Calu3 (cell line): ENCODE measurements at regions of chr17 and their contacts with region 1.

Region 1: DNA sequence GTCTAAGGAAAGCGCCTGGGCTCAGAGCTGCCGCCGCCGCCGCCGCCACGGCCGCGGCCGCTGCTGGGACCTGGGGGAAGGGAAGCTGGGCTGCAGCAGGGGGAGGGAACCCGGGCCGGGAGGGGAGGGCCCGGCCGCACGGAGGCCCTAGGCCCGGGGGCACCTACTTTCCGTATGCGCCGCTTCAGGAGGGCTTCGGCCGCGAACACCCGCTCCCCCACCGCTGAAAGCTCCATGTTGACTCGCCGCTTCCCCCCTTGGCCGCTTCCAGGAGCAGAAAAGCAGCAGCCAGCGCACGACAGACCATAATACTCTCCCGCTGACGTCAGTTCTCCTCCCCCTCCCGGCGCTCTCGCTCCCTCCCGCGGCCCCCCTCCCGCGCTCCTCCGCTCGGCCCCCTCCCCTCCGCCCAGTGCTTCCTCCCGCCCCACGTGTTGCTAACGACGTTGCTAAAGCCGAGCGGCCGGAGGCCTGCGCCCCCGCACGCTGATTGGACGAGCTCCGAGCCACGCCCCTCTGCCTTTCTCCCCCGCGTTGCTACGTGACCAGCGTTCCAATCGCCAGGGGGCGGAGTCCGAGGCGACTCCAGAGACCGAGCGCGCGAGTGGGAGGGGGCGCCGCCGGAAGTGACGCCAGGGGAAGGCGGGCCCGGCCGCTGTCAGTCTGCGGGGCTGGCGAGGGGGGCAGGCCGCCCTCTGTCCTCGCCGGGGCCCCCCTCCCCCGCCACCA is at the start of gene CBX8:
- DNase-seq: peak; percentile 100
- H3K4me3 Mint-ChIP-seq: peak within 1 kb of the TSS; percentile 75
- H3K27ac Mint-ChIP-seq: peak within 1 kb of the TSS; percentile 86
- H3K4me1 Mint-ChIP-seq: peaks cover 22% of the 10 kb centered on the region
- H3K27me3 Mint-ChIP-seq: peaks cover 39% of the 10 kb centered on the region
- CTCF ChIP-seq: no peak
- total RNA-seq, gene CBX8: 11.1 and 11.8 TPM in 2 replicates

Region 2: GRCh38 chr17:79126139-79126538 is 670.8 kb before region 1 on chr17:
- CTCF ChIA-PET with region 1: no interaction called
- intact Hi-C with region 1: no loop called
- DNase-seq: peak; percentile 40
- H3K4me3 Mint-ChIP-seq: no peak overlapping the region
- H3K27ac Mint-ChIP-seq: no peak overlapping the region
- H3K4me1 Mint-ChIP-seq: no peaks in the 10 kb centered on the region
- H3K27me3 Mint-ChIP-seq: no peaks in the 10 kb centered on the region
- CTCF ChIP-seq: peak; percentile 55

Region 3: DNA sequence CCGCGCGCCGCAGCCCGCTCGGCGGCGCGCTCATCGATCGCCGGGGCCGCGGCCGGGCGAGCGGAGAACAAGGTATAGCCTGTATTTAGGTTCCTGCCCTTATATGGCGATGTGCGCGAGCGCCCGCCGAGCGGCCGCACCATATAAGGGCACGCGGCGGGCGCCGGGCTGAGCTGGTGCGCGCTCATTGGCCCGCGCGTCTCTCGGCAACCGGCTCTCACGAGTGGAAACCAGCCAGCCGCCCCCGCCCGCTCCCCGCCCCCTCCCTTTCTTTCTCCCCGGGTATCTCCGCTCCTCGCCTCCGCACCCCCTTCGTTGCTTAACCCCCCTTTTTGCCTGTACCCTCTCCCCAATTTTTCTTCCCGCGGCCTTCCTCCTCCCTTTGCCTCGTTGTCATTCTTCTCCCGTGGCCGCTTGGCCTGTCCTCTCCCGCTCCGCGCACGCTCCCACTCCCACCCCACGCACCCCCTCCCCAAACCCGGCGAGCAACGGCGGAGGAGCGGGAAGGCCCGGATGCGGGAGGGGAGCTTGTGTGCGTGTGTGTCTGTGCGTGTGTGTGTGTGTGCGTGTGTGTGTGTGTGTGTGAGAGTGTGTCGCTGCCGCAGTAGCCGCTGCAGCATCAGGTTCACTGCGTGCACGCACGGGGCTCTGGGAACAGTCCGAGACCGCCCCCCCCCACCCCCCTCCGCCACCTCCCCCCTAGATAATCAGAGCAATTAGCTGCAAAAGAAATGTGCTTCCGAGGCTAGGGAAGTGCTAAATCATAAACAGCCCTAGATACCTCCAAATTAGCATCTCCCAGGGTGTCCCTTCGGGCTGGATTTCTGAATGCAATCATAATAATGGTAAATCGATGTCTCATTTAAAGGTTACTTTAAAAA is 13.4 kb after region 1 on chr17:
- CTCF ChIA-PET with region 1: interaction called, 16 read pairs
- intact Hi-C with region 1: no loop called
- DNase-seq: peak; percentile 88
- H3K4me3 Mint-ChIP-seq: peak overlapping the region; percentile 65
- H3K27ac Mint-ChIP-seq: peak overlapping the region; percentile 48
- H3K4me1 Mint-ChIP-seq: peaks cover 22% of the 10 kb centered on the region
- H3K27me3 Mint-ChIP-seq: peaks cover 52% of the 10 kb centered on the region
- CTCF ChIP-seq: no peak

Region 4: GRCh38 chr17:79832211-79833109 is 35.5 kb after region 1 on chr17:
- CTCF ChIA-PET with region 1: interaction called, 10 read pairs
- intact Hi-C with region 1: loop called (anchors 5 kb)
- DNase-seq: peak; percentile 50
- H3K4me3 Mint-ChIP-seq: peak overlapping the region; percentile 40
- H3K27ac Mint-ChIP-seq: peak overlapping the region; percentile 10
- H3K4me1 Mint-ChIP-seq: peaks cover 38% of the 10 kb centered on the region
- H3K27me3 Mint-ChIP-seq: no peaks in the 10 kb centered on the region
- CTCF ChIP-seq: no peak

Region 5: DNA sequence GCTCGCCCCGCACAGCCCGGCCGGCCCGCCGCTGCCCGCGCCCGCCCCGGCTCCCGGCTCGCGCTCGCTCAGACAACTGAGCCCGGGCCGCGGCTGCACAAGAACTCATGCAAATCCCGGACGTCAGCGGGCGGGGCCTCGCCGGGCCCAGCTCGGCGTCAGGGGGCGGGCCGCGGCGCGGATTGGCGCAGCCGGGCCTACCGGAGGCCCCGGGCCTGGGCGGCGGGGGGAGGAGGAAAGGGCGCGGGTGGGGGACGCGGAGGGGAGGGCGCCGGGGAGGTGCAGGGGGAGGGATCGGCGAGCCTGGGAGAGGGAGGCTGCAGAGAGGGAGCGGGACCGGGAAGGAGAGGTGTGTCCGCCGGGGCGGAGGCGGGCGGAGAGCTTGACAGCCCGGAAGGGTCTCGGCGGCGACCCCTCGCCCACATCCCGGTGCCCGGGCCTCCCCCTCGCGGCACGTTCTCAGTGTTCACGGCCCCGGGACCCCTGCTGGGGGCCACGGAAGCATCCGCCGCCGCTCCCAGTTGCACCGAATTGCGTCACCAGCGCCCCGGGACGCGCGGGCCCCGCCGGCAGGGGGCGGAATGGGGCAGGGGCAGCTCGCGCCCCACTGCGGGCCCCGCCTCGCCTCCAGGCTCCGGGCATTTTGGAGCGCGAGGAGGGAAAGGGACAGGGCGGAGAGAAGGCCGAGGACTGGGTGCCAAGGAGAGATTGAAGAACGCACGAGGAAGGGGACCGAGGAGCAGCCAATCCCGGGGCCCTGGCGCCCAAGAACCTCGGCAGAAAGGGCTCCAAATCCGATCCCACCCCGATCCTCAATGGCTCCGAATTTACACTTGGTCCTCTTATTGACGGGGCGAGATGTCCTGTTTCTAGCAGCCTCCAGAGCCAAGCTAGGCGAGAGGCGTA is 42.7 kb after region 1 on chr17 and contains the start of gene CBX4:
- CTCF ChIA-PET with region 1: interaction called, 8 read pairs
- intact Hi-C with region 1: loop called (anchors 5 kb)
- DNase-seq: peak; percentile 96
- H3K4me3 Mint-ChIP-seq: peak within 1 kb of the TSS; percentile 85
- H3K27ac Mint-ChIP-seq: peak within 1 kb of the TSS; percentile 74
- H3K4me1 Mint-ChIP-seq: peaks cover 15% of the 10 kb centered on the region
- H3K27me3 Mint-ChIP-seq: peaks cover 38% of the 10 kb centered on the region
- CTCF ChIP-seq: peak; percentile 97
- total RNA-seq, gene CBX4: 40.2 and 46.8 TPM in 2 replicates